Stomach (tissue), 19 donors: ENCODE measurements at regions of chrX and their contacts with region 1.

Region 1: DNA sequence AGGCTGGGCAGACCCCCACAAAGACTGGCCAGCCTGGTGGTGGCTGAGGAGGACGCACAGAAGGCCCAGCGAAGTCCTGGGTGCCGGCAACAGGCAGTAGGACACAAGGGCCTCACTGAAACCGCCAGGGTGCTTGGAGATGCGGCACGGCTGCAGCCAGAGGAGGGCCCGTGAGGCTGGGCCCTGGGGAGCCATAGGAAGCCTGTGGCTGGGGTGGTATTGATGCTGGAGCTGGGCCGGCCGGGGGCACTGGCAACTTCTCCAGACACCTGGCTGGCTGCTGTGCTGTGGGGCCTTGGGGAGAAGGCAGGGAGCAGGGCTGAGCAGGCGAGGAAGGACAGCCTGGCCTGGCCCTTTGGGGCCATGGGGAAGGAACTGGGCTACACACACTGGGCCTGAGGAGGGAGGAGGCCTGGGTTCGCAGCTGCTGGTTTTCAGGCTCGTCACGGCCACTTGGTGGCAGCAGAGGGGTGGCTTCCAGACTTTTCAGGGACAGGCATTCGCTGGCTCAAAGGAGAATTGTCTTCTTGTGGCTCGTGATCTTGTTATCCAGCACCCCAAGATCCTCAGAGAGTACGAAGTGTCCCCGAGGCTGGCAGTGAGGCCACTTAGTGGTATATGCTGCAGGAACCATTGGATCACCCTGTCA is 37.2 kb downstream of the ATP2B3 start:
- DNase-seq: peak; percentile 61 to 82
- H3K4me3 ChIP-seq: no peak overlapping the region
- H3K27ac ChIP-seq: no peak overlapping the region
- H3K4me1 ChIP-seq: no peaks in the 10 kb centered on the region
- H3K27me3 ChIP-seq: peaks cover 0 to 11% (median 5%) of the 10 kb centered on the region in 3 donors
- CTCF ChIP-seq: peak in 4 of 7 experiments; percentile 42 to 55 (median 46)
- EP300 ChIP-seq: no peak
- POLR2A ChIP-seq: no peak

Region 2: GRCh38 chrX:153667956-153668396 is 113.3 kb after region 1 on chrX:
- intact Hi-C with region 1: loop called (anchors 10 kb)
- DNase-seq: peak; percentile 87 to 94
- H3K4me3 ChIP-seq: no peak overlapping the region
- H3K27ac ChIP-seq: peak overlapping the region in 1 of 5 donors; percentile 51
- H3K4me1 ChIP-seq: peaks cover 0 to 8% (median 0%) of the 10 kb centered on the region in 4 donors
- H3K27me3 ChIP-seq: peaks cover 0 to 36% (median 25%) of the 10 kb centered on the region in 3 donors
- CTCF ChIP-seq: peak in 5 of 7 experiments; percentile 50 to 75 (median 64)
- EP300 ChIP-seq: no peak
- POLR2A ChIP-seq: no peak

Region 3: GRCh38 chrX:153687121-153688039 is 132.7 kb after region 1 on chrX and contains the start of gene SLC6A8:
- intact Hi-C with region 1: no loop called
- DNase-seq: peak; percentile 74 to 83
- H3K4me3 ChIP-seq: peak within 1 kb of the TSS; percentile 45 to 50 (median 45)
- H3K27ac ChIP-seq: peak within 1 kb of the TSS in 3 of 5 donors; percentile 49 to 82 (median 74)
- H3K4me1 ChIP-seq: peaks cover 0 to 24% (median 20%) of the 10 kb centered on the region in 4 donors
- H3K27me3 ChIP-seq: peaks cover 8 to 21% (median 20%) of the 10 kb centered on the region in 3 donors
- CTCF ChIP-seq: peak in 2 of 7 experiments; percentile 14 to 37
- EP300 ChIP-seq: no peak
- POLR2A ChIP-seq: no peak
- total RNA-seq, gene SLC6A8: 17.7 to 32.7 (median 19.1) TPM